Testis (tissue), 5 donors: ENCODE measurements at regions of chr11 and their contacts with region 1.

Region 1: DNA sequence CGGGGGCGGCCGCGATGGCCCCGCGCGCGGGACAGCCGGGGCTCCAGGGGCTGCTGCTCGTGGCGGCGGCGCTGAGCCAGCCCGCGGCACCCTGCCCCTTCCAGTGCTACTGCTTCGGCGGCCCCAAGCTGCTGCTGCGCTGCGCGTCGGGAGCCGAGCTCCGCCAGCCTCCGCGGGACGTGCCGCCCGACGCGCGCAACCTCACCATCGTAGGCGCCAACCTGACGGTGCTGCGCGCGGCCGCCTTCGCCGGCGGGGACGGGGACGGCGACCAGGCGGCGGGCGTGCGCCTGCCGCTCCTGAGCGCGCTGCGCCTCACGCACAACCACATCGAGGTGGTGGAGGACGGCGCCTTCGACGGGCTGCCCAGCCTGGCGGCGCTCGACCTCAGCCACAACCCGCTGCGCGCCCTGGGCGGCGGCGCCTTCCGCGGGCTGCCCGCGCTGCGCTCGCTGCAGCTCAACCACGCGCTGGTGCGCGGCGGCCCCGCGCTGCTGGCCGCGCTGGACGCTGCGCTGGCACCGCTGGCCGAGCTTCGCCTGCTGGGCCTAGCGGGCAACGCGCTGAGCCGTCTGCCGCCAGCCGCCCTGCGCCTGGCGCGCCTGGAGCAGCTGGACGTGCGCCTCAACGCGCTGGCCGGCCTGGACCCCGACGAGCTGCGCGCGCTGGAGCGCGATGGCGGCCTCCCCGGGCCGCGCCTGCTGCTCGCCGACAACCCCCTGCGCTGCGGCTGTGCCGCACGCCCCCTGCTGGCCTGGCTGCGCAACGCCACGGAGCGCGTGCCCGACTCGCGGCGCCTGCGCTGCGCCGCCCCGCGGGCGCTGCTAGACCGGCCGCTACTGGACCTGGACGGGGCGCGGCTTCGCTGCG is 697 bp downstream of the TPBGL start:
- DNase-seq: peak; percentile 86
- H3K4me3 ChIP-seq: peak overlapping the region; percentile 57 to 63
- H3K27ac ChIP-seq: peak overlapping the region in 1 of 2 donors; percentile 79
- H3K4me1 ChIP-seq: no peaks in the 10 kb centered on the region
- H3K27me3 ChIP-seq: no peaks in the 10 kb centered on the region
- CTCF ChIP-seq: peak; percentile 85 to 99 (median 99)
- POLR2A ChIP-seq: no peak

Region 2: GRCh38 chr11:74948898-74949747 is 292.1 kb before region 1 on chr11 and contains the starts of genes SPCS2 and XRRA1:
- intact Hi-C with region 1: loop called (anchors 10 kb)
- DNase-seq: peak; percentile 100
- H3K4me3 ChIP-seq: peak within 1 kb of the TSS; percentile 92 to 93
- H3K27ac ChIP-seq: peak within 1 kb of the TSS; percentile 87 to 92
- H3K4me1 ChIP-seq: peaks cover 26% of the 10 kb centered on the region
- H3K27me3 ChIP-seq: no peaks in the 10 kb centered on the region
- CTCF ChIP-seq: no peak
- POLR2A ChIP-seq: no peak
- total RNA-seq, gene SPCS2: 37.0 to 61.1 TPM
- total RNA-seq, gene XRRA1: 58.4 to 74.0 TPM

Region 3: DNA sequence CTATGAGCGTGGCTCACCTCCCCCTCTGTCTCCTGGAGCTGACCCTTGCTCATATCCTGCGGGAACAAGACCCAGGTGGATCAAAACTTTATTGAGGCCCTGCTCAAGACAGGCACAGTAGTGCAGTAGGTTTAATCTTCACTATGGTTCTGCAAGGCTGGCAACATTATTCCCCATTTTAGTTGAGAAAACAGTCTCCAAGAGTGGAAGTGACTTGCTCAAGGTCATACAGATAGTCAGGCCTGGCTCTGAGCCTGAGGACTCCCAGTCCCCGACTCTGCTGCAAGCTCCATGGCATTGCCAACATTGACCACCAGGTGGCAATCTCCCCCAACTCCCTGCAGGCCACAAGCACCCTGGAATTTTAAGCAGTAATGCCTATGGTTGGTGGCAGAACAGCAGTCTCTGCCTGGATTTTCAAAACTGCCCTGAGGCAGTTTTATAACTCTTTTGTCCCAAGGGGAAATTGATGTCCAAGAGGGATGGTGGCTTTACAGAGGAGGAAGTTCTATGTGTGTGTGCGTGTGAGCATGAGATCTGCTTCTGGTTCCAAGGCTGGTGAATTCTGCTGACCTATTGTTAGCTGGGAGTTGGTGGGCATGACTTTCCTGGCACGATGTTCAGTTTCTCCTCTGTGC is 218.4 kb before region 1 on chr11:
- intact Hi-C with region 1: loop called (anchors 10 kb)
- DNase-seq: peak; percentile 94
- H3K4me3 ChIP-seq: no peak overlapping the region
- H3K27ac ChIP-seq: no peak overlapping the region
- H3K4me1 ChIP-seq: peaks cover 7% of the 10 kb centered on the region
- H3K27me3 ChIP-seq: no peaks in the 10 kb centered on the region
- CTCF ChIP-seq: peak; percentile 95 to 96 (median 95)
- POLR2A ChIP-seq: no peak

Region 4: DNA sequence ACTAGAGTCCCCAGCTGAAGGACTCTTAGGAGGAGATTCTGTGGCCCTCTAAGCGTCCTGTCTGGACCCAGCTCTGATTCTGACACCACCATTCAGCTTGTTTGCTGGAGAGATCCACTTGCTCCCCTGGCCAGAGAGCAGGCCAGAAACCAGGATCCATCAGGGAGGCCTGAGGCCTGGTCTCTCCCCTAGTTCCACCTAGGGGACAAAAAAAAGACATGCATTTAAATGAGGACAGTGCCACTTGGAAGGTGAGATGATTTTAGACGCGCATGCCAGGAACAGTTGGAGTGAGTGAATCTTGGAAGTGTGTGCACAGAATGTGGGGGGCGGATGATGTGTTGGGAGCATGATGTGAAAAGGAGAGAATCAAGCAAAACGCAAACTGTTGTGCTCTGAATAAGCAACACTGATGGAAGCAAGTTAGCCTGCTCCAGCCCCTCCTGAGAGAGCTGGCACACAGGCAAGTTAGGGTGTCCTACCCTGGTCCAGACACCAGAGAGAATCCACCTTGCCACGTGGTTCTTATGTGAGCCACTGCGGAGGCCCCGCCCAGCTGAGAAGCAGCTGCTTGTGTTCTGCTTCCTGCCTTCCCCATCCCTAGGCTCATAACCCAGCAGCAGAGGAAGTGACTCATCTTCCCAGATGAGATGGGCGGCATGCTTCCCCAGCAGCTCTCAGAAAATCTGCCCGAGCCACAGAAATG is 98.4 kb before region 1 on chr11:
- intact Hi-C with region 1: loop called (anchors 5 kb)
- DNase-seq: peak; percentile 68
- H3K4me3 ChIP-seq: no peak overlapping the region
- H3K27ac ChIP-seq: no peak overlapping the region
- H3K4me1 ChIP-seq: no peaks in the 10 kb centered on the region
- H3K27me3 ChIP-seq: no peaks in the 10 kb centered on the region
- CTCF ChIP-seq: no peak
- POLR2A ChIP-seq: no peak

Region 5: DNA sequence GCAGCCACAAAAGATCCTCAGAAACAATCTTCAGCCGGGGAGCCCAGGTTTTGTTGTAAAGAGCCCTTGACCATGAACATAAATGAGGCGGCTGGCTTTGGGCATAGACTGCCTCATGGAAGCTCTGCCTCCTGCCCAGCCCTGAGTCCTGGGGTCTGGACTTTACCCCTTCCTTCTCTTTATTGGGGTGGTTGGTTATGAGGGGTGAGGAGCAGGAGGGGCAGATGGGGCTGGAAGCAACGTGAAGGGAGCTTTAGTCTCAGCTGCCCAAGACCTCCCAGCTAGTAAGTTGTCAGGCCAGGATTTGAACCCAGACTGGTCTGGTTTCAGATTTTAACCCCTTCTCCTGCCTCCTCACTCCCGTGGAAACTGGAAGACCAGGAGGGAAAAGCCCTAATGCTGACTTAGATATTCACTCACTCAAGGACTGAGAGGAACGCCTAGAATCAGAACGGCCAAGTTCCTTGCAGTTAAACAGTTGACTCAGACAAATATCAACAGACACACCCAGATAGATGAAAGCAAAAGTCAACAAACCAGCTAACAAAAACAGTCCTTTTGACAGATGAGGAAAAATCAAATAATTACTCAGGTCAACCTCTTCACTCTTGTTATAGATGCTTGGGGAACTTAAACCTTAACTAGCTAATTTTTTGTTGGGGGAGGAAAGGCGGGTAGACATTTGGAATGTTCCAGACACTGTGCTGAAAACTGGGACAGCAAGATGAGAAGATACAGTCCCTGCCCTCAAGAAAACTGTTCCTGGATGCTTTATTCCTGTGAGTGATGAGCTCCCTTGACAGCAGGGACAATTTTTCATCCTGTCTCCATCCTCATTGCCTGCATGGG is 130.9 kb after region 1 on chr11:
- intact Hi-C with region 1: no loop called
- DNase-seq: peak; percentile 37
- H3K4me3 ChIP-seq: no peak overlapping the region
- H3K27ac ChIP-seq: peak overlapping the region in 1 of 2 donors; percentile 41
- H3K4me1 ChIP-seq: no peaks in the 10 kb centered on the region
- H3K27me3 ChIP-seq: no peaks in the 10 kb centered on the region
- CTCF ChIP-seq: no peak
- POLR2A ChIP-seq: no peak

Region 6: DNA sequence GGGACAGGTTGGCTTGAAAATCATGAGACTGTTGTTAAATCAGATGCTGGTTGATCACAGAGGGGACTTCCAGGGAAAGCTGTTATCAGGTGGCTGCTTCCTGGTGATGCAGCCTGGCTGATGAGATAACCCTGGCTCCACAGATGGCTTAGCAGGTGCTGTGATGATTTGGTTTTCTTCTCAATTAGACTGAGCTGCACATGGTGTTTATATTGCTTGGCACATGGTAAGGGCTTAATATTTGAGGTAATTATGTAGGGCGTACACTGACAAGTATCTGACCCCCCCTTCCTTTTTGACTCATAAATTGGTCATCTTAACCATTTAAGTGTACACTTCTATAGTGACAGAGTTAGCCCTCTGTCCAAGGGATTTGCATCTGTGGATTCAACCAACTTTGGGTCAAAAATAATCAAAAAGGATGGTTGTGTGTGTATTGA is 165.1 kb after region 1 on chr11:
- intact Hi-C with region 1: no loop called
- DNase-seq: no peak
- H3K4me3 ChIP-seq: no peak overlapping the region
- H3K27ac ChIP-seq: no peak overlapping the region
- H3K4me1 ChIP-seq: peaks cover 14% of the 10 kb centered on the region
- H3K27me3 ChIP-seq: no peaks in the 10 kb centered on the region
- CTCF ChIP-seq: no peak
- POLR2A ChIP-seq: no peak